Right ventricle myocardium superior (tissue), 1 donor: ENCODE measurements at regions of chr19 and their contacts with region 1.

Region 1: DNA sequence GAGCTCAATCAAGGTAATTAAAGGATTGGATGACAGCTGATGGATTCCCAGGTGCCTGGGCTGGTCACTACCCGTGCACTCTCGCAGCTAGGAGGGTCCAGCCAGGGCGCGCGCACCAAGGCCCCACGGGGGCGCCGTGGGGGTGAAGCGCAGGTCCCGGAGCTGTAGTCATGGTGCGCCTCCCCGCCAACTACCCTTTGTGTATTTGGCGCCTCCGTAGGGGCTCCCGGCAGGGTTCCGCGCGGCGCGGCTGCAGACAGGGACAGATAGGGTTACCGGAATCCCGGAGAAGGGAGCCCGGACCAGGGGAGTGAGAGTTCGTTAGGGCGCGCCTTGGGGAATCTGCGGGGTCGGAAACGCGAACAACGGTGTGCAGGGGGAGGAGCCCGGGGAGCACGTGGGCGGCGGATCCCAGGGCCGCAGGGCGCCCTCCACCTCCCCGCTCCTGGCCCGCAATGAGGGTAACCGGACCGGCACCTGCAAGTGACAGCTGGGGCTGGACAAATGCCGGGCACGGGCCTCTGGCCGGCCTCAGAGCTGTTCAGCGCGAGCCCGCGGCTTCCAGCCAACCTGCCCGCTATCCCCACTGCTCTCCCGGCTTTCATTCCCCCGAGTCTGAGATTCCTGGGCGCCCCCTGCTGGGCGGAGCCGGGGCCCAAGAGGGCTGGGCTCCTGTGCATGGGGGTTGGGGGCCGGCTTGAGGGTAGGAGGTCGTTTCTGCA is 3.4 kb upstream of the PRAM1 start:
- DNase-seq: peak; percentile 90
- ATAC-seq: peak; percentile 93

Region 2: DNA sequence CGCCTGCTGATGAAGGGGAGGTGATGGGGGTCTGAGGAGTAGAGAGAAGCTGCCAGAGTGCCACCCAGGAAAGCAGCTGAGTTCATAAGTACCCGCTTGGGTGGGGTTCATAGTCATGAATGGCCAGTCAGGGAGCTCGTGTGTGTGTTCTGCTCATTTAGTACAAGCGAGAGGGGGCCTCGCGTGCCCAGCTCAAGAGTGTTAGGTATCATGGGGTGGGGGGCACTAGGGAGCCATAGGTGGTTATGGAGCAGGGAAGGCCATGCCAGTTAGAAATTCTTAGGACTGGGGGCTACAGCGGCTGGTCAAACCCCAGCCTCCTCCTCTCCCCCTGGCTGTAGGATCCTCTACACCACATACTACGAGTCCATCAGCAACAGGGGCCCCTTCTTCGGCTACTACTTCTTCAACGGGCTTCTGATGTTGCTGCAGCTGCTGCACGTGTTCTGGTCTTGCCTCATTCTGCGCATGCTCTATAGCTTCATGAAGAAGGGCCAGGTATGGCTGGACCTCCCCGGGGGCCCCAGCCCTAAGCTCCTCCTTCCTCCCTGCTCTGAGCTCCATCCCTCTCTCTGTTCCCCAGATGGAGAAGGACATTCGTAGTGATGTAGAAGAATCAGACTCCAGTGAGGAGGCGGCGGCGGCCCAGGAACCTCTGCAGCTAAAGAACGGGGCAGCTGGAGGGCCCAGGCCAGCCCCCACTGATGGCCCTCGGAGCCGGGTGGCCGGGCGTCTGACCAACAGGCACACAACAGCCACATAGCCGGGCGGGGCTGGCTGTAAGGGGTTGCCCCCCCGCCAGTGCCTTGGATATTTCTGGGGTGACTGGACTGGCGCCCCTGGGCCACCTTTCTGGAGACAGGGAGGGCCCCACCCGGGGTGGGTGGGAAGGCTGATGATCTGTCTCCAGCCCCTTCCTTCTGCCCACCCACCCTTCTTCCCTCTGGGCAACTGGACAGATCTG is 244.2 kb before region 1 on chr19:
- intact Hi-C with region 1: loop called (anchors 10 kb)
- DNase-seq: no peak
- ATAC-seq: no peak

Region 3: GRCh38 chr19:8355631-8356402 is 150.0 kb before region 1 on chr19:
- intact Hi-C with region 1: loop called (anchors 5 kb)
- DNase-seq: no peak
- ATAC-seq: no peak

Region 4: GRCh38 chr19:8412783-8413628 is 92.8 kb before region 1 on chr19 and contains the start of gene MARCHF2:
- intact Hi-C with region 1: loop called (anchors 5 kb)
- DNase-seq: peak; percentile 99
- ATAC-seq: peak; percentile 99
- total RNA-seq, gene MARCHF2: 100.0 TPM

Region 5: GRCh38 chr19:8569066-8569771 is 63.4 kb after region 1 on chr19:
- intact Hi-C with region 1: no loop called
- DNase-seq: peak; percentile 61
- ATAC-seq: peak; percentile 60